ENCODE measurements at regions of chr19 and their contacts with region 1.

Region 1: DNA sequence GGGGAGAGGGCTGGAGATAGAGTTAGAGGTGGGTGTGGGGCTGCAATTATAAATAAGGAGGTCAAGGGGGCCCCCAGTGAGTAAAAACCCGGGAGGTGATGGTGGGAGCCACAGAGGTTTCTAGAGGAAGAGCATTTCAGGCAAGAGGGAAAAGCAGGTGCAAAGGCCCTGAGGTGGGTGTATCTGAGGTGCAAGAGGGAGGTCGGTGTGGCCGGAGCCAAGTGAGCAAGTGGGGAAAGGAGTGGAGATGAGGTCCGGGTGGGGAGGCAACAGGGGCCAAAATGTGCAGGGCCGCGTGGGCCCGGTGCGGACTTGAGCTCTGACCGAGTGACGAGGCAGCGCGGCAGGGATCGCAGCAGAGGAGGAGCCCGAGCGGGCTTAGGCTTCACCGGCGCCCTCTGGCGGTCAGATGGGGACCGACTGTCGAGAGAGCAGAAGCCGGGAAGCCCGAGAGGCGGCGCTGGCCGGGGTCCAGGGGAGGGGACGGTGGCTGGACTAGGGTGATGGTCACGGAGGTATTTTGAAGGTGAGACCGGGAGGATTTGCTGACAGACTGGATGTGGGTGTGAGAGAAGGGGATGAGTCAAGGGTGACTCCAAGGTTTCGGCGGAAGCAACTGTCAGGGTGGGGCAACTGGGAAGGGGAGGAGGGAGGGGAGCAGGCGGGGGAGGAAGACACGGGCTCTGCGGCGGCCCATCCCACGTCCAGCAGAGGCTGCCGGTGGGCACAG is 17.7 kb upstream of the SPACA4 start:
- DNase-seq: no peak
- H3K4me3 ChIP-seq: peak overlapping the region; percentile 61
- CTCF ChIP-seq: peak; percentile 99

Region 2: DNA sequence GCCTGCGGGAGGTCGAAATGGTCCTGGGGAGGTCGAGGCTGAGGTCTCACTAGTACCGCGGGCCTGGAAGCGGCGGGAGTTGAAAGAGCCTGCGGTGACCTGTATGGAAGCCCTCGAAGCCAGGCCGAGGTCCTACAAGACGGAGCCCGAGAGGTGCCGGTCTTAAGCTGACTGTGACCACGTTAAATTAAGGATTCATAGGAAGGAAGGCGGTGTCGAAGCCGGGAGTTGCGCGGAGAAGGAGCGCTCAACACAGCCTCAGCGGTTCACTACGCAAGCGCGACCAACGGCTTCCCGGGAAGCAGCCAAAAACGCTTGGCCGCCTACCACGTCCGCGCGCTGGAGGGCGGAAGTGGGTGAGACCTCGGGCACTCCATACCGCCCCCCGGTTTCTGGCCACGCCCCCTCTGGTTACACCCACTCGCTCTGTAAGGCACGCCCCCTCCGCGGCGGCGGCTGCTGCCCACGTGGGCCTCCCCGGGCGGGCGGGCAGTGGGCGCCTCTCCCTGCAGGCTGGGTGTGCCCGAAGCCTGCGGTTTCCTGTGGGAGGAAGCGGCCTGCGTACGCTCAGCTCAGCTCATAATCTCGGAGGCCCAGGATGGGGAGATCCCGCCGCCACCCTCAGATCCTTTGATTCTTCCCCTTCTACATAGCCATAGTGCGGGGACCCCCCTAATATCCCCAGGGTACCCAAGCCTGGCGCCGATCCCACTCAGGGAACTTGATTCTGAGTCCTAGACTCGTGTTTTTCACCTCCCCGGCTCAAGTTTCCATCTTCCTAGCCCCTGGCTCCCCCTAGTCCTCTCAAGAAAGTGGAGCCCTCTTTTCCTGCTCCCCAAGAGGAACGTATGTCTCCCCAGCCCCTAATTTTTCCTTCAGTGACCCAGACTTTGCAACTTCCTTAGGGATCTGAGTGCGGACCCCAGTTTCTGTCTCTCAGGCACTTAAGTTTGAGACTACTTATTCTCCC is 266.9 kb before region 1 on chr19:
- CTCF ChIA-PET with region 1: interaction called, 10 read pairs
- POLR2A ChIA-PET with region 1: no interaction called
- DNase-seq: peak; percentile 86
- H3K4me3 ChIP-seq: peak overlapping the region; percentile 67
- CTCF ChIP-seq: no peak

Region 3: DNA sequence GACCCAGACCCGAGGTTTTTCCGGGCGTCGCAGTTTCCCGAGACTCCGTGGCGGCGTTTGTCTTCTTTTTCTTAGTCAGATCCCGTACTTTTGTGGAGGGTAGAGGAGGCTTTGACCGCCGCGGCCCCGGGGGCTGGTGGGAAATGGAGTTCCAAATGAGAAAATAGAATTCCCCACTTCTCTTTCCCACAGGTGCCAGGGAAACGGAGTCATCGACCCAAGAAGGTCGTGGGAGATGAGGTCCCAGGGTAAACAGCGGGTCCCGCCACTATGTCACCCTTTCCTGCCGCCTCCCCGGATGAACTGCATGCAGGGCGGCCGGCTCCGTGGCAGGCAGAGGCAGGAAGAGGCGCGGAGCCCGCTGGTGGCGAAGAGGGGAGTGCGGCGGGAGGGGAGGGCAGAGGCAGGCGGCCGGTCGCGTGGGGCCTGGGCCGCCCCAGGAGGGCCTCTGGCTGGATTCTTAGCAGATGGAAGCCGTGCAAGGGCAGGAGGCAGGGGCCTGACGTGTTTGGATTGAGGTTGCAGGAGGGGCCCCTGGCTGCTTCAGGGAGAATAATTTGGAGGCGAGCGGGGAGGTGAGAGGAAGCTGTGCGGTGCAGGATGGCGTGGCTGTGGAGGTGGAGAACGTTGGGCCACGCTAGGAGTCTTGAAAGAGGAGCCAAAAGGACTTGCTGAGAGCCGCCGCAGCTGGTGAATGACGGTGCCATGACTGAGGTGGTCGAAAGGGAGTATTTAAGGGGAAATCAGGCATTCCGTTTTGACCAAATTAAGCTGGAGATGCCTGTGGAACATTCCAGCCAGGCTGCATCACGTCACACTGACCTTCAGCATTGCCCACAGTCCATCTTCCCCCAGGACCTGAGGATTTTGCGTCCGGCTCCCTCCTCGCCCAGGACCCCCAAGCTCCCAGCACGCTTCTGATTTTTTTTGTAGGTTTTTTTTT is 108.0 kb before region 1 on chr19:
- CTCF ChIA-PET with region 1: interaction called, 14 read pairs
- POLR2A ChIA-PET with region 1: no interaction called
- DNase-seq: no peak
- H3K4me3 ChIP-seq: peak overlapping the region; percentile 42
- CTCF ChIP-seq: no peak

Region 4: GRCh38 chr19:48568345-48568886 is 20.4 kb before region 1 on chr19:
- CTCF ChIA-PET with region 1: interaction called, 30 read pairs
- POLR2A ChIA-PET with region 1: no interaction called
- DNase-seq: no peak
- H3K4me3 ChIP-seq: peak overlapping the region; percentile 15
- CTCF ChIP-seq: no peak

Region 5: DNA sequence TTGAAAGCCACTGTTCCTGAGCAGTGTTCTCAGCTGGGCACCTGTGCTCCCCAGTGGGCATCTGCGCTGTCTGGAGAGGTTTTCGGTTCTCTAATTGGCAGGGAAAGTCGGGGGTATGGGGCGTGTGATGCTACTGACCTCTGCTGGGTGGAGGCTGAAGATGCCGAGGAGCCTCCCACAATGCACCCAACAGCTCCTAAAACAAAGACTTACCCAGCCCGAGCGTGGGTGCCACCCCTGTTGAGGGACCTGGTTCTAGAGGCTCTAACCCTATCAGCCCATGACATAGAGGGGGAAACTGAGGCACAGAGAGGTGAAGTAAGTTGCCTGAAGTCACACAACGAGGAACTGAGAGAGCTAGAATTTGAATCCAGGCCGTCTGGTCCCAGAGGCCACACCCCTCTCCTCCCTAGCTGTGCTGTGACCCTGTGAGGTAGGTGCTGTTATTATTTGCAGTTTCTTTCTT is 20.0 kb after region 1 on chr19:
- CTCF ChIA-PET with region 1: interaction called, 36 read pairs
- POLR2A ChIA-PET with region 1: no interaction called
- DNase-seq: no peak
- H3K4me3 ChIP-seq: no peak overlapping the region
- CTCF ChIP-seq: peak; percentile 66

Region 6: DNA sequence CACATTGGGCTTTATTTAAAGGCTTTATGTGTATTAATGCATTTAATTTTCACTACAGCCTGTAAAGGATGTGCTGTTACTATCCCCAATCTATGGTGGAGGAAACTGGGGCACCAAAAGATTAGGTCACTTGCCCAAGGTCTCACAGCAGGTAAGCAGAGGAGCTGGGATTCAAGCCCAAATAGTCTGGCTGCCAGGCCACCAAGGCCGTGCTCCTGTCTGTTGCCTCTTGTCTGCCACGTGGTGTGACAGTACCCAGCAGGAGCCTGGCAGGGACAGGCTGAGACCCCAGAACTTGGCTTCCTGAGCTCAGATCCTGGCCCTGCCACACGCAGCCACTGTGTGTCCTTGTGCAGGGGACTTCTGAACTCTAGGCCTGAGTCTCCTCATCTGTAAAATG is 79.5 kb after region 1 on chr19:
- CTCF ChIA-PET with region 1: no interaction called
- POLR2A ChIA-PET with region 1: no interaction called
- DNase-seq: no peak
- H3K4me3 ChIP-seq: no peak overlapping the region
- CTCF ChIP-seq: no peak

Region 7: GRCh38 chr19:48806518-48806817 is 217.6 kb after region 1 on chr19:
- CTCF ChIA-PET with region 1: no interaction called
- POLR2A ChIA-PET with region 1: no interaction called
- DNase-seq: no peak
- H3K4me3 ChIP-seq: no peak overlapping the region
- CTCF ChIP-seq: no peak

Measured in AG04449 (cell line).